ENCODE measurements at regions of chr16 and their contacts with region 1.

Region 1: GRCh38 chr16:23952128-23952970 is 116.6 kb downstream of the PRKCB start:
- DNase-seq: peak; percentile 90 to 97 (median 95)
- H3K4me3 ChIP-seq: peak overlapping the region in 5 of 7 experiments; percentile 4 to 62 (median 45)
- H3K27ac ChIP-seq: peak overlapping the region; percentile 75 to 83
- H3K4me1 ChIP-seq: peaks cover 27 to 79% (median 72%) of the 10 kb centered on the region in 4 experiments
- H3K27me3 ChIP-seq: no peaks in the 10 kb centered on the region

Region 2: DNA sequence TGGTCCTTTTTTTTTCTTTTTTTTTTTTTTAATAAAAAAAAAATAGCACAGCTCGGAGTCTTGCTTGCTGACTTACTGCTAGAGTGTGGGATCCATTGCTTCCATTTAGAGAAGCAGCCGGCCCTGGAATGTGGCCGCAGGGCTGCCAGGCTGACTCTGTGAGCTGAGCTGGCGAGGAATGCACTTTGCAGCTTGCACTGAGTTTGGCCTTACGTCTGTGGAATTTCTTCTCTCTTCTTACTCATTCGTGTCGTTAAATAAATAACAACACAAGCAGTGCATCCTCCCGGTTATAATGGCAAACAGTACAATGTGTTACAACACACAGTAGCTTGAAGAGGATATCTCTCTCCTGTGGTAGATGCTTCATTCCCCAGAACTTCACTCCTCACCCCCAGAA is 47.3 kb before region 1 on chr16:
- CTCF ChIA-PET with region 1: interaction called, 19 read pairs
- POLR2A ChIA-PET with region 1: interaction called, 4 read pairs
- DNase-seq: no peak
- H3K4me3 ChIP-seq: no peak overlapping the region
- H3K27ac ChIP-seq: peak overlapping the region in 1 of 2 experiments; percentile 18
- H3K4me1 ChIP-seq: peaks cover 29 to 92% (median 72%) of the 10 kb centered on the region in 4 experiments
- H3K27me3 ChIP-seq: no peaks in the 10 kb centered on the region

Region 3: GRCh38 chr16:23966597-23967394 is 14.4 kb after region 1 on chr16:
- CTCF ChIA-PET with region 1: interaction called, 18 read pairs
- POLR2A ChIA-PET with region 1: interaction called, 4 read pairs
- DNase-seq: peak; percentile 75 to 88 (median 85)
- H3K4me3 ChIP-seq: peak overlapping the region in 1 of 7 experiments; percentile 3
- H3K27ac ChIP-seq: peak overlapping the region in 1 of 2 experiments; percentile 4
- H3K4me1 ChIP-seq: peaks cover 9 to 36% (median 28%) of the 10 kb centered on the region in 4 experiments
- H3K27me3 ChIP-seq: no peaks in the 10 kb centered on the region

Region 4: DNA sequence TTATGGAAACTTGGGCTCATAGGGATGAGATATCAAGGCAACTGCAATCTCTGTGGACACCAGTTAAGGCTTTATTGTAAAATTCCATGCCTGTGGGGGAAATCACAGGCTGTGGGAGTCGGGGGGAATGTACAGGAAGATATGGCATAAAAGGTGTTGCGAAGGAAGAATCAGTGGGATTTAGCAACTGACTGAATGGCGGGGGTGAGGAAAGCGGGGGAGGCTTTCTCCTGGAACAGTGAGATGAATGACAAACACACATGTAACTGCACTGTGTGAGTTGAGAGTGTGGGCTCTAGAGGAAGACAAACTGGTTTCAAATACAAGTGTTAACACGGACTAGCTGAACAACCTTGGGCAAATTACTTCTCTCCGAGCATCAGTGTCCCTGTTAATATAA is 27.1 kb after region 1 on chr16:
- CTCF ChIA-PET with region 1: no interaction called
- POLR2A ChIA-PET with region 1: no interaction called
- DNase-seq: no peak
- H3K4me3 ChIP-seq: no peak overlapping the region
- H3K27ac ChIP-seq: no peak overlapping the region
- H3K4me1 ChIP-seq: peaks cover 4 to 25% (median 23%) of the 10 kb centered on the region in 4 experiments
- H3K27me3 ChIP-seq: no peaks in the 10 kb centered on the region